CD4-positive, alpha-beta T cell (primary cell): ENCODE measurements at regions of chr6 and their contacts with region 1.

Region 1: DNA sequence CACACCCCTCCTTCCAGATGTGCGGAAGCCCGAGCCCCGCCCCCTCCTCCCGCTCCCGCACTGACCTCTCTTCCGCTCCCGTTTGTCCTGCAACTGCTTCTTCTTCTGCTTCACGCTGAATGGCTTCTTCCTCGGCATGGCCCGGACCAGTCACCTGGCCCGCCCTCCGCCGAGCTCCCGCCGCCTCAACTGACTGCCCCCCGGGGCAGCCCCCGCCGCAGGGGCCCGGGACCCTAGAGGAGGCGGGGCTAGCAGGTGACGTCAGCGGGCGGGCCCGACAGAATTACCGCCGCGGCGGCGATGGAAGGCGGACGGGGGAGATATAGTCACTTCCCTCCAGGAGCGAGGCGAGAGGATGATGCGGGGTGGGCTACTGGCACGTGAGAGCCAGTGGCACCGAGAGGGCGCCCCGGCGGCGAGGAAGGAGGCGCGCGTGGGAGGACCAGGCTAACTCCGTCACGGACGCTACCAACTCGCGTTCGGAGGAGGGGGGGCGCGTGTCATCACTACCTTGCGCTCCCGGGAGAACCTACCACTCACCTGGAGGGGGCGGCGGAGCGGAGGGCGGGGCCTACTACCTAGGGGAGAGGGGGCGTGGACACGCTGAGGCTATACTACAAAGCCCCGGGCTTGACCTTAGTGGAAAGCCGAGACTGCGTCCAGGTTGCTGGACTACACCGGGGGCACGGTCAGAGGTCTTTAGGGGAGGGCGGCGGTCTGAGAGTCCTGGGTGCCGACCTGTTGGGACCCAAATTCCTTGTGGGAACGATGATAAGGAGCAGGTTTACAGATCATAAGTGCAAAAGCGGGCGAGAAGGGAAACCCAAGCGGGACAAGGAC is at the start of gene GNL1:
- DNase-seq: peak; percentile 98 to 100 (median 99)
- ATAC-seq: peak; percentile 88
- H3K4me3 ChIP-seq: peak within 1 kb of the TSS; percentile 86
- H3K4me3 Mint-ChIP-seq: peak within 1 kb of the TSS; percentile 98
- H3K27ac ChIP-seq: peak within 1 kb of the TSS; percentile 94 to 97
- H3K27ac Mint-ChIP-seq: peak within 1 kb of the TSS; percentile 97
- H3K4me1 ChIP-seq: peaks cover 27% of the 10 kb centered on the region
- H3K4me1 Mint-ChIP-seq: peaks cover 50% of the 10 kb centered on the region
- H3K27me3 ChIP-seq: no peaks in the 10 kb centered on the region
- H3K27me3 Mint-ChIP-seq: no peaks in the 10 kb centered on the region
- CTCF ChIP-seq: no peak
- total RNA-seq, gene GNL1: 145 to 151 TPM

Region 2: DNA sequence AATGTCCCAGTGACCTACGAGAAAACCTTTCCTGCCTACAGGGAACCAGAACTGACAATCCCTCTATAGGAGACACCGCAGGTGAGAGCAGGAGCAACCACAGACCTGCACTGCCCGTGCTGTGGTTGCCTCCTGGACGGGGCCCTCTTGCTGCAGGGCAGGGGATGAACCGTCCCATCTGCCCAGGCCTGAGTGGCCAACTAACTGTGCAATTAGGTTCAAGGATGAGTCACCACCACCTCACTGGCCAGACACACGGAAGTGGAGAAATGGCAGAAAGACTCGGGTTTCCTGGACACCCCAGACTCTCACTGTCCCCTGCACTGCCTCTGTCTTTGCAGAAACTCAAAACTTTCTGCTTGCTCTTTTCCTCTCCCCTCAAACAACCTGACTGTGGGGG is 742.5 kb before region 1 on chr6:
- CTCF ChIA-PET with region 1: no interaction called
- POLR2A ChIA-PET with region 1: no interaction called
- intact Hi-C with region 1: no loop called
- DNase-seq: no peak
- ATAC-seq: no peak
- H3K4me3 ChIP-seq: no peak overlapping the region
- H3K4me3 Mint-ChIP-seq: no peak overlapping the region
- H3K27ac ChIP-seq: no peak overlapping the region
- H3K27ac Mint-ChIP-seq: no peak overlapping the region
- H3K4me1 ChIP-seq: no peaks in the 10 kb centered on the region
- H3K4me1 Mint-ChIP-seq: no peaks in the 10 kb centered on the region
- H3K27me3 ChIP-seq: peaks cover 0 to 2% of the 10 kb centered on the region in 2 experiments
- H3K27me3 Mint-ChIP-seq: peaks cover 23% of the 10 kb centered on the region
- CTCF ChIP-seq: no peak

Region 3: DNA sequence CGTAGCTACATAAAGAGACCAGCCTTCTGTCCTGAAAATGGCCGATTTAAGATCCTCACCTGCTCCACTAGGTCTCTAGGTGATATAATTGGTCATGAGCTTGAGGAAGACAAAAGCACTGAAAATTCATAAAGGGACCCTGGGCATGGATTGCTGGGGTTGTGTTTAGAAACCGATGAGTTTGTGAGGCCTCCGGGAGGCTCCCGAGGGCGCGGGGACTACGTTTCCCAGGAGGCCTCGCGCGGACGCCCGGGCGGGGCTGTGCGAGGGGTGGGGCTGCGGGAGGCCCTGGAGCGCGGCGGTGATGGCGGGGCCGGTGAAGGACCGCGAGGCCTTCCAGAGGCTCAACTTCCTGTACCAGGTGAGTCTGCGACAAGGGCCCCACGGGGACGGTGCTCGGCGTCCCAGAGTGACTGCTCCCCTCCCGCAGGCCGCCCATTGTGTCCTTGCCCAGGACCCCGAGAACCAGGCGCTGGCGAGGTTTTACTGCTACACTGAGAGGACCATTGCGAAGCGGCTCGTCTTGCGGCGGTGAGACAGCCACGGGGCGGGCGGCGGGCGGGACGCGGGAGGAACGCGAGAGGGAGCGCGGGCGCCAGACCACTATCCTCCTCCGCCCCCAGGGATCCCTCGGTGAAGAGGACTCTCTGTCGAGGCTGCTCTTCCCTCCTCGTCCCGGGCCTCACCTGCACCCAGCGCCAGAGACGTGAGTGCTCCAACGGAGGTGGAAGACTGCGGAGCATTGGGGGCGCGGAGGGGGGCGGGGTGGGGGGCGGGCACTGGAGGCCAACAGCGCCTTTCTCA is 211.2 kb before region 1 on chr6 and contains the start of gene RPP21:
- CTCF ChIA-PET with region 1: no interaction called
- POLR2A ChIA-PET with region 1: no interaction called
- intact Hi-C with region 1: loop called in 1 of 2 experiments (anchors 5 kb)
- DNase-seq: peak; percentile 74 to 92 (median 85)
- ATAC-seq: peak; percentile 99
- H3K4me3 ChIP-seq: peak within 1 kb of the TSS; percentile 91
- H3K4me3 Mint-ChIP-seq: peak within 1 kb of the TSS; percentile 96
- H3K27ac ChIP-seq: peak within 1 kb of the TSS; percentile 88 to 90
- H3K27ac Mint-ChIP-seq: peak within 1 kb of the TSS; percentile 90
- H3K4me1 ChIP-seq: peaks cover 22% of the 10 kb centered on the region
- H3K4me1 Mint-ChIP-seq: peaks cover 26% of the 10 kb centered on the region
- H3K27me3 ChIP-seq: no peaks in the 10 kb centered on the region
- H3K27me3 Mint-ChIP-seq: no peaks in the 10 kb centered on the region
- CTCF ChIP-seq: no peak
- total RNA-seq, gene RPP21: 42.8 to 51.9 TPM

Region 4: GRCh38 chr6:30515932-30516753 is 40.1 kb before region 1 on chr6:
- CTCF ChIA-PET with region 1: no interaction called
- POLR2A ChIA-PET with region 1: interaction called, 3 read pairs
- intact Hi-C with region 1: loop called in 1 of 2 experiments (anchors 1 kb)
- DNase-seq: peak; percentile 78 to 98 (median 87)
- ATAC-seq: peak; percentile 84
- H3K4me3 ChIP-seq: peak overlapping the region; percentile 55
- H3K4me3 Mint-ChIP-seq: peak overlapping the region; percentile 89
- H3K27ac ChIP-seq: peak overlapping the region; percentile 92 to 98
- H3K27ac Mint-ChIP-seq: peak overlapping the region; percentile 99
- H3K4me1 ChIP-seq: peaks cover 83% of the 10 kb centered on the region
- H3K4me1 Mint-ChIP-seq: peaks cover 69% of the 10 kb centered on the region
- H3K27me3 ChIP-seq: no peaks in the 10 kb centered on the region
- H3K27me3 Mint-ChIP-seq: no peaks in the 10 kb centered on the region
- CTCF ChIP-seq: no peak

Region 5: GRCh38 chr6:30533460-30534294 is 22.6 kb before region 1 on chr6:
- CTCF ChIA-PET with region 1: interaction called, 3 read pairs
- POLR2A ChIA-PET with region 1: interaction called, 10 read pairs
- intact Hi-C with region 1: no loop called
- DNase-seq: peak in 2 of 14 experiments; percentile 56 to 76
- ATAC-seq: no peak
- H3K4me3 ChIP-seq: peak overlapping the region; percentile 29
- H3K4me3 Mint-ChIP-seq: peak overlapping the region; percentile 90
- H3K27ac ChIP-seq: no peak overlapping the region
- H3K27ac Mint-ChIP-seq: peak overlapping the region; percentile 79
- H3K4me1 ChIP-seq: peaks cover 40% of the 10 kb centered on the region
- H3K4me1 Mint-ChIP-seq: peaks cover 41% of the 10 kb centered on the region
- H3K27me3 ChIP-seq: no peaks in the 10 kb centered on the region
- H3K27me3 Mint-ChIP-seq: no peaks in the 10 kb centered on the region
- CTCF ChIP-seq: no peak

Region 6: DNA sequence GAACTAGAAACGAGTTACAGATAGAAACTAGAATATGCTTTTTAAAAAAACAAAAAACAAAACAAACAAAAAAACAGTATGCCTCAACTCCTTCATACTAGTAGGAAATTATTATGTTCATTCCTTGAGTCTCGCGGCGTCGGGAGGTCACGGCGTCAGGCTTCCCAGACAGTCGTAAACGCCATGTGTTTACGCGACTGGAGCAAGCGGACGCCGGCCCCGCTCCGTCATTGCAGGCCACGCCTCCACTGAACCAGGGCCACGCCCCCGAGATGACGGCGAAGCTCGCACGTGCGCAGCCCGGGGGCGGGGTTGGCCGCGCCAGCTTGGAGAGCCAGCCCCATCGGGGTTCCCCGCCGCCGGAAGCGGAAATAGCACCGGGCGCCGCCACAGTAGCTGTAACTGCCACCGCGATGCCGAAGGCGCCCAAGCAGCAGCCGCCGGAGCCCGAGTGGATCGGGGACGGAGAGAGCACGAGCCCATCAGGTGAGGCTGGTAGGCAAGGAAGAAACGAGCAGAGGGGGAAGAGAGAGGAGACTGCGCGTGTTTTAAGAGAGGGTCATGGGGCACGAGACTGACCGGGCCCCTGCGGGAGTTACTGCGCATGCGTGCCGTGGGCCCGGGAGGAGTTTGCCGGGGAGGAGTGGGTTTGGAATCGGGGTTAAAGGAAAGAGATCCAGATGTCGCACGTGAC is 14.9 kb after region 1 on chr6 and contains the start of gene ABCF1:
- CTCF ChIA-PET with region 1: no interaction called
- POLR2A ChIA-PET with region 1: interaction called, 106 read pairs
- intact Hi-C with region 1: loop called (anchors 1 kb)
- DNase-seq: peak; percentile 97 to 100 (median 99)
- ATAC-seq: peak; percentile 90
- H3K4me3 ChIP-seq: peak within 1 kb of the TSS; percentile 82
- H3K4me3 Mint-ChIP-seq: peak within 1 kb of the TSS; percentile 100
- H3K27ac ChIP-seq: peak within 1 kb of the TSS; percentile 94 to 98
- H3K27ac Mint-ChIP-seq: peak within 1 kb of the TSS; percentile 98
- H3K4me1 ChIP-seq: peaks cover 47% of the 10 kb centered on the region
- H3K4me1 Mint-ChIP-seq: peaks cover 56% of the 10 kb centered on the region
- H3K27me3 ChIP-seq: no peaks in the 10 kb centered on the region
- H3K27me3 Mint-ChIP-seq: no peaks in the 10 kb centered on the region
- CTCF ChIP-seq: no peak
- total RNA-seq, gene ABCF1: 86.1 to 88.0 TPM

Region 7: GRCh38 chr6:30626484-30627366 is 70.4 kb after region 1 on chr6 and contains the start of gene ATAT1:
- CTCF ChIA-PET with region 1: no interaction called
- POLR2A ChIA-PET with region 1: no interaction called
- intact Hi-C with region 1: no loop called
- DNase-seq: peak; percentile 77 to 95 (median 86)
- ATAC-seq: peak; percentile 99
- H3K4me3 ChIP-seq: peak within 1 kb of the TSS; percentile 81
- H3K4me3 Mint-ChIP-seq: peak within 1 kb of the TSS; percentile 92
- H3K27ac ChIP-seq: peak within 1 kb of the TSS; percentile 68 to 91
- H3K27ac Mint-ChIP-seq: peak within 1 kb of the TSS; percentile 93
- H3K4me1 ChIP-seq: peaks cover 16% of the 10 kb centered on the region
- H3K4me1 Mint-ChIP-seq: peaks cover 20% of the 10 kb centered on the region
- H3K27me3 ChIP-seq: no peaks in the 10 kb centered on the region
- H3K27me3 Mint-ChIP-seq: no peaks in the 10 kb centered on the region
- CTCF ChIP-seq: peak; percentile 64
- total RNA-seq, gene ATAT1: 4.1 to 5.2 TPM

Region 8: DNA sequence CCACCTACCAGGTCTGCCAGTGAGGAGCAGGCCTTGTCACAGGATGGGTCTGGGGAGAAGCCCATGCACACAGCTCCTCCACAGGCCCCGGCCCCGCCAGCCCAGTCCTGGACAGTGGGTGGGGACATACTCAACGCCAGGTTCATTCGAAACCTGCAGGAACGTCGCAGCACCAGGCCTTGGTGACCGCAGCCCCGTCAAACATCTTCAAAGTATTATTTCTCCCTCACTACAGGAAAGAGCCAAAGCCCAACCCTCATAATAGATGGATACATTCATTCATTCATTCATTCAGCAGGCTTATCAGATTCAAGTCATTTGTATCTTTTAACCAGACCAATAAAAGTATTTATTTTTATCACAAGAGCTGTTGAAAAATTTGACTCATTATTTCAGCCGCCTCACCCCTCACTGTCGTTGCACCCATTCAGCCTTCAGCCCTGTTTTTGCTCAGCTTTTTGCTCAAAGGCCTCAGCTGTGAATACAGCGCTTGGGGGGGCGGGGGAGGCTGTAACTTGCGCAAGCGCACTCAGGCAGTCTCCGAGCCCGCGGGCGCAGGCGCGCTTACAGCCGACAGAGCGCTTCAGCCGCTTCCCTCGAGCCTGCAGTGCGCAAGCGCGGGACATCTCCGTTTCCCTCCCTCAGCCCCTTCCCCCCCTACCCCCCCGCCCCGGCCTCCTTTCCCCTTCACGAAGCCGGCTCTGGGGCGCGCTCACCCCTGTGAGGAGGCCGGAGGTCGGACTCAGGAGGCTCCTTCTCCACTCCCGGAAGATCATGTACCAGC is 90.4 kb after region 1 on chr6 and contains the start of gene C6orf136:
- CTCF ChIA-PET with region 1: no interaction called
- POLR2A ChIA-PET with region 1: no interaction called
- intact Hi-C with region 1: no loop called
- DNase-seq: peak; percentile 84 to 99 (median 94)
- ATAC-seq: peak; percentile 79
- H3K4me3 ChIP-seq: peak within 1 kb of the TSS; percentile 85
- H3K4me3 Mint-ChIP-seq: peak within 1 kb of the TSS; percentile 93
- H3K27ac ChIP-seq: peak within 1 kb of the TSS; percentile 86 to 91
- H3K27ac Mint-ChIP-seq: peak within 1 kb of the TSS; percentile 89
- H3K4me1 ChIP-seq: peaks cover 23% of the 10 kb centered on the region
- H3K4me1 Mint-ChIP-seq: peaks cover 23% of the 10 kb centered on the region
- H3K27me3 ChIP-seq: no peaks in the 10 kb centered on the region
- H3K27me3 Mint-ChIP-seq: no peaks in the 10 kb centered on the region
- CTCF ChIP-seq: no peak
- total RNA-seq, gene C6orf136: 20.3 to 21.7 TPM